Adrenal gland (tissue), 19 donors: ENCODE measurements at regions of chr5 and their contacts with region 1.

Region 1: GRCh38 chr5:96614110-96614691 is 48.0 kb upstream of the CAST start:
- DNase-seq: peak; percentile 32 to 84 (median 76)
- H3K4me3 ChIP-seq: no peak overlapping the region
- H3K27ac ChIP-seq: peak overlapping the region in 2 of 5 donors; percentile 59
- H3K4me1 ChIP-seq: no peaks in the 10 kb centered on the region
- H3K27me3 ChIP-seq: no peaks in the 10 kb centered on the region
- CTCF ChIP-seq: peak; percentile 24 to 85 (median 77)
- POLR2A ChIP-seq: no peak

Region 2: GRCh38 chr5:96687812-96688453 is 73.7 kb after region 1 on chr5:
- intact Hi-C with region 1: loop called in 1 of 2 experiments (anchors 10 kb)
- DNase-seq: no peak
- H3K4me3 ChIP-seq: peak overlapping the region in 1 of 4 donors; percentile 18
- H3K27ac ChIP-seq: peak overlapping the region in 1 of 5 donors; percentile 31
- H3K4me1 ChIP-seq: no peaks in the 10 kb centered on the region
- H3K27me3 ChIP-seq: no peaks in the 10 kb centered on the region
- CTCF ChIP-seq: peak; percentile 34 to 80 (median 62)
- POLR2A ChIP-seq: no peak

Region 3: GRCh38 chr5:96729156-96729555 is 115.0 kb after region 1 on chr5:
- intact Hi-C with region 1: loop called (anchors 10 kb)
- DNase-seq: no peak
- H3K4me3 ChIP-seq: no peak overlapping the region
- H3K27ac ChIP-seq: no peak overlapping the region
- H3K4me1 ChIP-seq: no peaks in the 10 kb centered on the region
- H3K27me3 ChIP-seq: no peaks in the 10 kb centered on the region
- CTCF ChIP-seq: peak; percentile 10 to 52 (median 30)
- POLR2A ChIP-seq: no peak